Astrocyte of the cerebellum (primary cell): ENCODE measurements at regions of chr1 and their contacts with region 1.

Region 1: GRCh38 chr1:91450260-91450659 is 45.6 kb upstream of the HFM1 start:
- DNase-seq: no peak
- H3K4me3 ChIP-seq: no peak overlapping the region
- CTCF ChIP-seq: no peak

Region 2: DNA sequence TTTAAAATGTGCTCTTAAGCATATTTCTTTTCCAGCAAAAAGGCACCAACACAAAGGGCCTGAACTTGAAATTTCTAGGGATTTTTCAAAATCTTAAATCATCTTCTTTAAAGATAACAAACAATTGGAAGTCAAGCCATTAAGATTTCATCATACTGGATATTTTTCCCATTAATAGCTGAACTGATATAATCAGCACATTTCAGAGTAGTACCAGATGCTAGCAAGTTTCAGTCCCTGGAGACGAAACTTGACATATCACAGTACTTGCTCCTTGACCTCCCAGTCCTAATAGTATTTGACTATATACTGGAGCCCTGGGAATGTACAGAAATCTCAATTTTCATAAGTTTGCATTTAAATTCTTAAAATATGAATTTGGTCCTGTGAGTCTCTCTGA is 40.2 kb after region 1 on chr1:
- in situ Hi-C with region 1: loop called (anchors 5 kb)
- DNase-seq: no peak
- H3K4me3 ChIP-seq: no peak overlapping the region
- CTCF ChIP-seq: no peak